H1 (cell line): ENCODE measurements at regions of chr4 and their contacts with region 1.

Region 1: GRCh38 chr4:41865306-41865980 is 69.8 kb upstream of the TMEM33 start:
- DNase-seq: peak in 1 of 2 experiments; percentile 55
- H3K4me3 ChIP-seq: peak overlapping the region in 3 of 4 experiments; percentile 29 to 51 (median 42); a peak in 4 of 8 replicates
- H3K27ac ChIP-seq: no peak overlapping the region
- H3K4me1 ChIP-seq: peaks cover 7 to 25% (median 14%) of the 10 kb centered on the region in 4 experiments
- H3K27me3 ChIP-seq: peaks cover 46 to 79% (median 64%) of the 10 kb centered on the region in 4 experiments
- CTCF ChIP-seq: no peak
- EP300 ChIP-seq: no peak
- POLR2A ChIP-seq: no peak
- RAD21 ChIP-seq: no peak

Region 2: DNA sequence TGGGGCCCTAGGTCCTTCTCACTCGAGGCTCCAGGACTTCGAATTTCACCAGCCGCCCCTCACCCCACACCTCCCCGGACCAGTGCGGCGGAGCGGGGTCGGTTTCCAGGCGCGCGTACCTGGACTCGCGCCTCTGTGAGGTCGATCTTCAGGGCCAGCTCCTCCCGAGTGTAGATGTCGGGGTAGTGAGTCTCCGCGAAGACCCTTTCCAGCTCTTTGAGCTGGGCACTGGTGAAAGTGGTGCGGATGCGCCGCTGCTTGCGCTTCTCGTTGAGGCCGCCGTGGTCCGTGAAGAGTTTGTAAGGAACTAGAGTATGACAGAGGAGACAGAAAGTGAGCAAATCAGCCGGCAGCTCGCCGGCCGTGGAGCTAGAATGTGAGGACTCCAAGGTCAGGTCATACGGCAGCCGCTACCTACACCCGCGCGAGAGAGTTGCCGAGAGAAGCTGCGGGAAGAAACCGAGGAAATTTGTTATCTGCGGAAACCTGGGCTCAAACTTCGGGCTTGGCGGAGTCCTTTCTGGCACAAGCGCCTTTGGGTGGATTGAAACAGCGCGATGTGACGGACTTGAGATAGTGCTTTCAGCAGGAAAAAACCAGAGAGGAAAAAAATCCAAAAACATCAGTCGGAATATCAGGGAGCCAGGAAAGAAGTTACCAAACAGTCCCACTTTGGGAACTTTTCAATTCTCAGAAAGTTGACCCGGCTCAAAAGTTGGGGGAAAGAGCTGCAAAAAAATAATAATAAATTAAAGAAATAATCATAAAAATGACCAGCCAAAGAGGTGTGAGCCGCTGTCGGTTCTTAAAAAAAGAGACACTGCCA is 118.0 kb before region 1 on chr4:
- CTCF ChIA-PET with region 1: interaction called, 11 read pairs
- POLR2A ChIA-PET with region 1: interaction called, 4 read pairs
- DNase-seq: peak in 1 of 2 experiments; percentile 57
- H3K4me3 ChIP-seq: peak overlapping the region in 1 of 4 experiments; percentile 49; a peak in 2 of 8 replicates
- H3K27ac ChIP-seq: no peak overlapping the region
- H3K4me1 ChIP-seq: peaks cover 5 to 41% (median 24%) of the 10 kb centered on the region in 4 experiments
- H3K27me3 ChIP-seq: peaks cover 94 to 100% (median 98%) of the 10 kb centered on the region in 4 experiments
- CTCF ChIP-seq: no peak
- EP300 ChIP-seq: no peak
- POLR2A ChIP-seq: no peak
- RAD21 ChIP-seq: no peak

Region 3: GRCh38 chr4:41882625-41883347 is 17.3 kb after region 1 on chr4:
- CTCF ChIA-PET with region 1: interaction called, 17 read pairs
- POLR2A ChIA-PET with region 1: interaction called, 25 read pairs
- DNase-seq: peak in 1 of 2 experiments; percentile 67
- H3K4me3 ChIP-seq: peak overlapping the region in 2 of 4 experiments; percentile 33 to 63; a peak in 4 of 8 replicates
- H3K27ac ChIP-seq: no peak overlapping the region
- H3K4me1 ChIP-seq: peaks cover 0 to 24% (median 15%) of the 10 kb centered on the region in 4 experiments; a peak in 6 of 7 replicates
- H3K27me3 ChIP-seq: peaks cover 50 to 69% (median 68%) of the 10 kb centered on the region in 4 experiments
- CTCF ChIP-seq: peak in 2 of 3 experiments; percentile 67 to 75; a peak in 3 of 4 replicates
- EP300 ChIP-seq: no peak
- POLR2A ChIP-seq: no peak
- RAD21 ChIP-seq: peak; percentile 66 to 78

Region 4: GRCh38 chr4:41887821-41888686 is 22.6 kb after region 1 on chr4:
- CTCF ChIA-PET with region 1: interaction called, 14 read pairs
- POLR2A ChIA-PET with region 1: interaction called, 4 read pairs
- DNase-seq: no peak
- H3K4me3 ChIP-seq: no peak overlapping the region
- H3K27ac ChIP-seq: no peak overlapping the region
- H3K4me1 ChIP-seq: no peaks in the 10 kb centered on the region
- H3K27me3 ChIP-seq: peaks cover 3 to 17% (median 16%) of the 10 kb centered on the region in 4 experiments
- CTCF ChIP-seq: peak in 2 of 3 experiments; percentile 63 to 69; a peak in 3 of 4 replicates
- EP300 ChIP-seq: no peak
- POLR2A ChIP-seq: no peak
- RAD21 ChIP-seq: peak; percentile 79 to 80

Region 5: DNA sequence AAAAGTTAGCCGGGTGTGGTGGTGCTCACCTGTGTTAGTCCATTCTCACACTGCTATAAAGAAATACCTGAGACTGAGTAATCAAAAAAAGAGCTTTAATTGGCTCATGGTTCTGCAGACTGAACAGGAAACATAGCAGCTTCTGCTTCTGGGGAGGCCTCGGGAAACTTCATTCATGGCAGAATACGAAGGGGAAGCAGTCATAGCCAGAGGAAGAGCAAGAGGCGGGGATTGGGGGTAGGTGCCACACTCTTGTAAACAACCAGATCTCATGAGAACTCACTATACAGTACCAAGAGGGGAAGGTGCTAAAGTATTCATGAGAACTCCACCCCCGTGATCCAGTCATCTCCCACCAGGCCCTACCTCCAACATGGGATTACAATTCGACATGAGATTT is 222.9 kb after region 1 on chr4:
- CTCF ChIA-PET with region 1: no interaction called
- POLR2A ChIA-PET with region 1: no interaction called
- DNase-seq: no peak
- H3K4me3 ChIP-seq: no peak overlapping the region
- H3K27ac ChIP-seq: no peak overlapping the region
- H3K4me1 ChIP-seq: no peaks in the 10 kb centered on the region
- H3K27me3 ChIP-seq: no peaks in the 10 kb centered on the region
- CTCF ChIP-seq: no peak
- EP300 ChIP-seq: no peak
- POLR2A ChIP-seq: no peak
- RAD21 ChIP-seq: no peak